IMR-90 (cell line): ENCODE measurements at regions of chr12 and their contacts with region 1.

Region 1: GRCh38 chr12:75208856-75209811 is 505 bp downstream of the KCNC2 start:
- DNase-seq: peak; percentile 18
- ATAC-seq: peak; percentile 82
- H3K4me3 ChIP-seq: no peak overlapping the region
- H3K27ac ChIP-seq: no peak overlapping the region
- H3K4me1 ChIP-seq: no peaks in the 10 kb centered on the region
- H3K27me3 ChIP-seq: peaks cover 30% of the 10 kb centered on the region
- CTCF ChIP-seq: no peak
- POLR2A ChIP-seq: no peak
- RAD21 ChIP-seq: no peak

Region 2: GRCh38 chr12:75964150-75964549 is 755.0 kb after region 1 on chr12:
- CTCF ChIA-PET with region 1: no interaction called
- POLR2A ChIA-PET with region 1: no interaction called
- dilution Hi-C with region 1: no loop called
- in situ Hi-C with region 1: no loop called
- intact Hi-C with region 1: loop called (anchors 5 kb)
- DNase-seq: no peak
- ATAC-seq: no peak
- H3K4me3 ChIP-seq: no peak overlapping the region
- H3K27ac ChIP-seq: no peak overlapping the region
- H3K4me1 ChIP-seq: peaks cover 8% of the 10 kb centered on the region
- H3K27me3 ChIP-seq: no peaks in the 10 kb centered on the region
- CTCF ChIP-seq: no peak
- POLR2A ChIP-seq: no peak
- RAD21 ChIP-seq: no peak